Mammary epithelial cell (primary cell): ENCODE measurements at regions of chr20 and their contacts with region 1.

Region 1: GRCh38 chr20:362271-363254 is 15.7 kb downstream of the NRSN2 start:
- DNase-seq: peak; percentile 95
- H3K4me3 ChIP-seq: no peak overlapping the region
- H3K27ac ChIP-seq: peak overlapping the region; percentile 21
- H3K4me1 ChIP-seq: peaks cover 49% of the 10 kb centered on the region
- H3K27me3 ChIP-seq: no peaks in the 10 kb centered on the region
- CTCF ChIP-seq: peak; percentile 80 to 86

Region 2: GRCh38 chr20:208942-209566 is 153.5 kb before region 1 on chr20:
- CTCF ChIA-PET with region 1: no interaction called
- dilution Hi-C with region 1: no loop called
- in situ Hi-C with region 1: no loop called
- intact Hi-C with region 1: no loop called
- DNase-seq: peak; percentile 61
- H3K4me3 ChIP-seq: no peak overlapping the region
- H3K27ac ChIP-seq: no peak overlapping the region
- H3K4me1 ChIP-seq: no peaks in the 10 kb centered on the region
- H3K27me3 ChIP-seq: peaks cover 8% of the 10 kb centered on the region
- CTCF ChIP-seq: peak; percentile 70 to 73

Region 3: DNA sequence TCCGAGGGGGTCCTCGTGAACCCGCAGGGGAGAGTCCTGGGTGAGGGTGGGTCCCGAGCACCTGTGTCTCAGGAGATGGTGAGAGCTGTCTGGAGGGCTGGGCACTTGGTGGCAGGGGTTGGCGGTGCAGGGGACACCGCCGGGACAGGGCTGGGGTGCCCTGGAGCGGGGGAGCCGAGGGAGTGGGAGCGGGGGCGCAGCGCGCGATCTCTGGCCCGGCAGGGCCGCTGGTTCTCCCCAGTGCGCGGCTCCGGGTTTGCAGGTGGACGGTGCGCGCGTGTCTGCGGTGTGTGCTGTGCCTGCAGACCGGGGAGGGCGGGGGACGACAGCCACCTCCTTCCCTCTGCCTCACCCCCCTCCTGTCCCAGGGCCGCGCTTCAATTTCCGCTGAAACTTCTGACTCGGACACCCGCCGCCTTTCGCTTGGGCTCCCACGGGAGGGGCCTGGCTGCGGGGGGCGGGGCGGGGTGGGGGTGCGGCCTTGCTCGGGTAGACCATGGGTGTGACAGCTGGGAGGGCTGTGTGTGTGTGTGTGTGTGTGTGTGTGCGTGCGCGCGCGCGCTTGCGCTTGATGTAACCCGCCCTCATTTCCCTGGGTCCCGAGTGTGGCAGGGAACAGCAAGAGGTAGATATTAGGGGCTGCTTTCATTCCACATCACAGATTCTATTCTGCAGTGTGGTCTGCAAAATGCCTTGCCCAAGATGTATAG is 19.2 kb after region 1 on chr20:
- CTCF ChIA-PET with region 1: interaction called, 5 read pairs
- dilution Hi-C with region 1: no loop called
- in situ Hi-C with region 1: no loop called
- intact Hi-C with region 1: loop called (anchors 1 kb)
- DNase-seq: peak; percentile 78
- H3K4me3 ChIP-seq: peak overlapping the region; percentile 84 to 97 (median 87)
- H3K27ac ChIP-seq: peak overlapping the region; percentile 29
- H3K4me1 ChIP-seq: peaks cover 18% of the 10 kb centered on the region
- H3K27me3 ChIP-seq: no peaks in the 10 kb centered on the region
- CTCF ChIP-seq: no peak

Region 4: DNA sequence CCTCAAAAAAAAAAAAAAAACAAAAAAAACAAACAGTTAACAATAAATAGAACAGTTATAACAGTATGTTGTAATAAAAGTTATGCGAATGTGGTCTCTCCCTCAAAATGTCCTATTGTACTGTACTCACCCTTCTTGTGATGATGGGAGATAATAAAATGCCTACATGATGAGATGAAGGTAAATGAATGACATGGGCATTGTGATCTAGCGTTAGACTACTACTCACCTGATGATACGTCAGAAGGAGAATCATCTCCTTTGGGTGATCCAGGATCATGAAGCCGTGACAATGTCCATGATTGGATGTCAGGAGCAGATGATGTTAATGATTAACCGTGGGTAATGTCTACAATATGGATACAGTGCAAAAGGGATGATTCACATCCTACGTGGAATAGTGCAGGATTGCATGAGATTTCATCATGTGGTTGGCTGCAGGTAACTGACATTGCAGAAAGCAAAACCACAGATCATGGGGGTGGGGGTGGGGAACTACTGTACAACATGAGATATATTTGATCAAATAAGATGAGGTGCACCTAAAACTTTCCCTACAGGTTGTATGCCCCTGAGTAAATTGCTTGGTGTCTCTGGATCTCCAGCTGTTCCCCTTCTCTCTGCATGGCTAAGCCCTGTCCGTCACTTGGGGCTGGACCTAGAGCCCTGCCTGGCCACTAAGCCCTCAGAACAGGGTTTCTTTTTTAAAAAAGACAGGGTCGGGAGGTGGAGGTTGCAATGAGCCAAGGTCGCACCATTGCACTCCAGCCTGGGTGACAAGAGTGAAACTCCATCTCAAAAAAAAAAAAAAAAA is 39.3 kb after region 1 on chr20:
- CTCF ChIA-PET with region 1: no interaction called
- dilution Hi-C with region 1: loop called (anchors 5 kb)
- in situ Hi-C with region 1: no loop called
- intact Hi-C with region 1: loop called (anchors 1 kb)
- DNase-seq: peak; percentile 100
- H3K4me3 ChIP-seq: no peak overlapping the region
- H3K27ac ChIP-seq: peak overlapping the region; percentile 69
- H3K4me1 ChIP-seq: peaks cover 25% of the 10 kb centered on the region
- H3K27me3 ChIP-seq: no peaks in the 10 kb centered on the region
- CTCF ChIP-seq: no peak

Region 5: DNA sequence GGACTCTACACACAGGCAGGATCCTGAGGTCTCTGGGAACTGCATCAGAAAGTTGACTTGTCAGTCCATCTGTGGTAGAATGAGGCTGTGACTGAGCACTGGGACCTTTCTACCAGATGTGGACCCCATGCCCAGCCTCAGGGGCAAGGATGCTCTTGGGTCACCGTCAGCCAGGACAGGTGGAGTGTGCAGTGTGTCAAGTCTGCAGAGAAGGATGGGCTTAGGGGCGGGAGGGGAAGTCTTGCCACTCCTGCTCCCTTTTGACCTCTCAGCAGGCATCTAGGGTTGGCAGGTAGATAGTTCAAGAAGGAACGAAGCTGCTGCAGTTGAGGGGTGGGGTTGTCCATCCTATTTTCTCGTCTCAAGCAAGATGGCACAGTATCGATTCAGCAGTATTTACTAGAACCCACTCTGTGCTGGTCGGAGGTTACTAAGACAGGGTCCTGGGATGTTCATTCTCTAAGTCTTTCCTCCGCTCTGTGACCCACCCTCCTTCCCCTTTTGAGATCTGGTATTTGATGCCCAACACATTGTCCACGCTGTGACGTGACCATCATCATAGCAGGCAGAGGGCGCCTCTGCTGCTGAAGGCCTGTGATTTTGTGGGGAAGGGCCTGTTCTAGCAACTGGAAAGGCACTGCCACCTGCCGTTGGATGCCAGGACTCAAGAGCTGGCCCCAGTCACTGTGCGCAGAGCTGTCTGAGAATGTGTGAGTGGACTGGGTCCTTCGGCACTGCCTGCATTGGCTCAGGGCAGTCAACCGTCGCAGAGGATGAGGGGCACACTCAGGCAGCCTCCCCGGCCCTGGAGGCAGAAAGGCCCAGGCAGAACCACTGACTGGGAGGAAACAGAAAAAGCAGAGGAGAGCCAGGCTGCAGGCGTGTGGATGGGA is 68.7 kb after region 1 on chr20:
- CTCF ChIA-PET with region 1: interaction called, 9 read pairs
- dilution Hi-C with region 1: loop called (anchors 5 kb)
- in situ Hi-C with region 1: no loop called
- intact Hi-C with region 1: no loop called
- DNase-seq: peak; percentile 30
- H3K4me3 ChIP-seq: no peak overlapping the region
- H3K27ac ChIP-seq: no peak overlapping the region
- H3K4me1 ChIP-seq: peaks cover 3% of the 10 kb centered on the region
- H3K27me3 ChIP-seq: no peaks in the 10 kb centered on the region
- CTCF ChIP-seq: peak; percentile 43 to 68

Region 6: GRCh38 chr20:610130-611046 is 247.8 kb after region 1 on chr20 and contains the start of gene TCF15:
- CTCF ChIA-PET with region 1: no interaction called
- dilution Hi-C with region 1: no loop called
- in situ Hi-C with region 1: no loop called
- intact Hi-C with region 1: no loop called
- DNase-seq: peak; percentile 4
- H3K4me3 ChIP-seq: no peak within 1 kb of the TSS
- H3K27ac ChIP-seq: no peak within 1 kb of the TSS
- H3K4me1 ChIP-seq: no peaks in the 10 kb centered on the region
- H3K27me3 ChIP-seq: peaks cover 51% of the 10 kb centered on the region
- CTCF ChIP-seq: no peak
- total RNA-seq, gene TCF15: not detected

Region 7: DNA sequence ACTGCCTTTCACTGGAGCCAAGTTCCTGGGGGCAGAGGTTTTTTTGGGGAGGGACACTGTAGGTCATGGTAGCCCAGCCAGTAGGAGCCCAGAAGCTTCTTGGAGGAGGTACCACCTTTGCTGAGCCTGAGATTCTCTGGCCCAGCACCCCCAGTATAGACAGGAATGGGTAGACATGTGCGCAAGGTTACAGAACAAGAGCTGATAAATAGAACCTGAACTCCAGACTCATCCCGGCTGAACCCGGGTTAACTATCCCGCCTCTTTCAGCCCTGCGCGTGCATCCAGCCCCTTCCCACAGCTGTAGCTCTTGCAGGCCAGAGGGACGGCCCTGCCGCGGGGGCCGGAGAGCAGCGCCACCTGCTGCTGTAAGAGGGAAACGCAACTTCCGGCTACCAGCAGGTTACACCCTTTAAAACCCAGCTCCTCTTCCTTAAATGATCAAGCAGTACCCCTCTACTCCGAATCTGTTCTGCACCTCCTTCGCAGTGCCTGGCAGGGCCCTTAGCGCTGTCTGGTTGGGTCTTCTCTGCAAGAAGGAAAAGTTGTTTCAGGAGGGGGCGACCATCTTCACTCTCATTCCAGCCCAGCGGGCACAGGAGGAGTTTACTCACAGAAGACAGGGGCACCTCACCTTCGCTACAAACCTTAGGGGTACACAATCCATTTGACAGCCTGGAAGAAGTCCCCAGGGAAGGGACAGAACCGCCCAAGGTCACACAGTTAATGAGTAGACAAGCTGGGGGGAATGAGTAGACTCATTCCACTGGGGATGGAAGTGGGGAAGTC is 282.9 kb after region 1 on chr20:
- CTCF ChIA-PET with region 1: interaction called, 3 read pairs
- dilution Hi-C with region 1: loop called (anchors 5 kb)
- in situ Hi-C with region 1: no loop called
- intact Hi-C with region 1: no loop called
- DNase-seq: peak; percentile 35
- H3K4me3 ChIP-seq: no peak overlapping the region
- H3K27ac ChIP-seq: no peak overlapping the region
- H3K4me1 ChIP-seq: no peaks in the 10 kb centered on the region
- H3K27me3 ChIP-seq: peaks cover 4% of the 10 kb centered on the region
- CTCF ChIP-seq: peak; percentile 72 to 95